ENCODE measurements at regions of chr16 and their contacts with region 1.

Region 1: DNA sequence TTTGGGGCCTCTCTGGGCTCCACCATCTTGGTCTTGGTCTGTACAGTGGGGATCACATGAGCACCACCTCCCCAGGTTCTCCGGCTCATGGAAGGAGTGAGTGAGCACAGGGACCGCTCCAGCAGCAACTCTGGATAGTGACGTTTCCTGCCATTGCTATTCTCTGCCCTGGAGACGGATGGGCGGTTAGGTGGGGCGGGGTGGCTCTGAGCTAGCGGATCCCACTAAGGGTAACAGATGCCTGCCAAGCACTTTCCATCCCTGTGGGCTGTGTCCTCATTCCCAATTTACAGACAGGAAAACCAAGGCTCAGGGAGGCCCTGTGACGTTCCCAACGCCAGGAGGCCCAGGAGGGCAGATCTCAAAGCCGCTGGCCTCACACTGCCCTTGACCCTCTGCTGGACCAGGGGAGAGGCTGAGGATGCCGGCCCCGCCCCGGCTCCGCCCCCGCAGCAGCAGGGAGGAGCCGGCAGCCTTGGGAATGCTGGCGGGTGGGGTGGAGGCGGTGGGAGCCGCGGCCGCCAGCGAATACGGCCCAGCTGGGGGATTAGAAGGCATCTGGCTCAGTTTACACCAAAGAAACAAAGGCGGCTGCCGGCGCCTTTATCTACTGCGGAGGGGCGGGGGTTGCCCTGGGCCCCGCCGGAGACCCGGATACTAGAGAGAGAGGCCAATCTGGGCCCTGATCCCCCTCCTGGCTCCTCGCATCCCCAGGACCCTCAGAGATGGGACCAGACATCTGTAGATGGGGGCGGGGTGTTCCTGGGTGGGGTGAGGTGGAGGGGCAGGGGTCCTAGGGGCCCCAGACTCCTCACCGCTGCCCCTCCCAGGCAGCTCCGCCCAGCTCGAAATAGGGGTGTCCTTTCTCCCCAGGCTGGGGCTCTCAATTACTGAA is 122.3 kb upstream of the CIBAR2 start:
- DNase-seq: peak; percentile 73
- H3K4me3 ChIP-seq: peak overlapping the region; percentile 47
- H3K27ac ChIP-seq: peak overlapping the region; percentile 93
- H3K27me3 ChIP-seq: no peaks in the 10 kb centered on the region
- CTCF ChIP-seq: no peak

Region 2: GRCh38 chr16:85202631-85203461 is 31.7 kb before region 1 on chr16:
- CTCF ChIA-PET with region 1: no interaction called
- POLR2A ChIA-PET with region 1: interaction called, 10 read pairs
- DNase-seq: peak; percentile 94
- H3K4me3 ChIP-seq: no peak overlapping the region
- H3K27ac ChIP-seq: peak overlapping the region; percentile 97
- H3K27me3 ChIP-seq: no peaks in the 10 kb centered on the region
- CTCF ChIP-seq: no peak

Region 3: DNA sequence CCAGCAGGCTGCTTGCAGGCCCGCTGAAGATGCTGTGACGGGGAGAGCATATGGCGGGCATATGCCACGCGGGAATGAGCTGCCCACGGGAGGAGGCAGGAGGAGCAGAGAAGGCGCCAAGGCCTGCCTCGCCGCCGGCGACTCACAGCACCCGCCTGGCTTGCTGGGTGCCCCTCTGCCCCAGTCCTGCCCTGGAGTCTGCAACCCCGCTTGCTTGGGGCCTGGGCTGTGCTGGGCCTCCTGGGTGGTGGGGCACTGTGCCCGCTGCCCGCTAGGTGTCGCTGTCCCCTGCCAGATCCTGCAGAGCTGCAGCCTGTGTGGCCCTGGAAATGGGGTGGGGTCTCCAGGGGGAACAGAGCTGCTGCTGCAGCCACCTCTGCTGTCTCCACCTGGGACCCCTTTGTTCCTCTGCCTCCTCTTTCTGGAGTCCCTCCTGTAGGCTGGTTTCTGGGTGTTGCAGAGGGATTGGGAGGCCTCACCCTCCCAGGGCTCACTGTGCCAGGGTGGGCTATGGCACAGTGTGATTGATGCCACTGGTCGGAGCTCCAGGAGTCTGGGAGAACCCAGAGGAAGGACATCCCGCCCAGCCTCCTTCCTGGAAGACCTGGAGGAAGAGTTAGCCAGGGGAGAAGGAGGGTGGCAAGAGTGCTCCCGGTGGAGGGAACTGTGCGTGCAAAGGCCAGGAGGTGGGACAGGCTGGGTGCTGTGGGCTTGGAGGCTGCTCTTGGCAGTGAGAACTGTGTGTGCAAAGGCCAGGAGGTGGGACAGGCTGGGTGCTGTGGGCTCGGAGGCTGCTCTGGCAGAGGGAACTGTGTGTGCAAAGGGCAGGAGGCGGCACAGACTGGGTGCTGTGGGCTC is 18.8 kb after region 1 on chr16:
- CTCF ChIA-PET with region 1: interaction called, 11 read pairs
- POLR2A ChIA-PET with region 1: interaction called, 3 read pairs
- DNase-seq: no peak
- H3K4me3 ChIP-seq: no peak overlapping the region
- H3K27ac ChIP-seq: no peak overlapping the region
- H3K27me3 ChIP-seq: no peaks in the 10 kb centered on the region
- CTCF ChIP-seq: peak; percentile 83

Region 4: GRCh38 chr16:85601730-85602401 is 367.3 kb after region 1 on chr16:
- CTCF ChIA-PET with region 1: no interaction called
- POLR2A ChIA-PET with region 1: no interaction called
- DNase-seq: no peak
- H3K4me3 ChIP-seq: no peak overlapping the region
- H3K27ac ChIP-seq: no peak overlapping the region
- H3K27me3 ChIP-seq: no peaks in the 10 kb centered on the region
- CTCF ChIP-seq: no peak